Colonic mucosa (tissue), 4 donors: ENCODE measurements at regions of chr9 and their contacts with region 1.

Region 1: DNA sequence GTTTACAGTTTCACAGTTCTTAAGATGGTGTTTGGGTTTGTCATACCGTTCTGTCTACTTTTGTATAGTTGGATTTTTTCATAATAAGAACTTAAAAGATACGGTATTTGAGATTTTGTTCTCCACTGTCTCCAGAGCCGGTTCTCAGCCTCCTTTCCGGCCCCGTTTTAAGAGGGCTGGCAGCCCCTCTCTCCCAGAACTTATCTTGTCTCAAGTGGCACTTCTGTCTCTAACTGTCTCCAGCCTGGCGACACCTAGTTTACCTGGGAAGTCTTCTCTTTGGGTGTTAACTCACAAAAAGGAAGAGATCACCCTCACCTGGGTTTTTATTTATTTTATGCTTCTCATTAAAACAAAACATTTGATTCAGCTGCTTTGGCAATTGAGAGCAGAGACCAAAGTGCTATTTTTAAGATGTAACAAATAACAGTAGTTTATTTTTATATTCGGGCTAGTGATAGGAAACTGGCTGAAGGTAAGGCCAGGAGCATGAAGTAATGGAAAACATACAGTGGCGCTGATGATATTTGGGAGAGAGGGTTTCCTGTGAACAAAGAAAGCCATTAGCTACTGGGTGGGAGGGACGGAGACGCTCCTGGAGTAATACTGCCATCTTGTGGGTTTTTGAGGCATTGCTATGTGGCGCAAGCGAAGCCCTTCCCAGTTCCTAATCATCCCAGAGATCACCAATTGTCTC is 48.3 kb downstream of the ACER2 start:
- DNase-seq: peak; percentile 78
- H3K4me3 ChIP-seq: no peak overlapping the region
- H3K27ac ChIP-seq: no peak overlapping the region
- H3K4me1 ChIP-seq: no peaks in the 10 kb centered on the region
- H3K27me3 ChIP-seq: no peaks in the 10 kb centered on the region
- CTCF ChIP-seq: peak; percentile 95

Region 2: GRCh38 chr9:19102631-19103345 is 354.4 kb before region 1 on chr9 and contains the start of gene HAUS6:
- intact Hi-C with region 1: no loop called
- DNase-seq: peak; percentile 98
- H3K4me3 ChIP-seq: peak within 1 kb of the TSS; percentile 91
- H3K27ac ChIP-seq: peak within 1 kb of the TSS; percentile 87
- H3K4me1 ChIP-seq: no peaks in the 10 kb centered on the region
- H3K27me3 ChIP-seq: no peaks in the 10 kb centered on the region
- CTCF ChIP-seq: peak; percentile 35
- total RNA-seq, gene HAUS6: 9.2 to 11.8 TPM

Region 3: DNA sequence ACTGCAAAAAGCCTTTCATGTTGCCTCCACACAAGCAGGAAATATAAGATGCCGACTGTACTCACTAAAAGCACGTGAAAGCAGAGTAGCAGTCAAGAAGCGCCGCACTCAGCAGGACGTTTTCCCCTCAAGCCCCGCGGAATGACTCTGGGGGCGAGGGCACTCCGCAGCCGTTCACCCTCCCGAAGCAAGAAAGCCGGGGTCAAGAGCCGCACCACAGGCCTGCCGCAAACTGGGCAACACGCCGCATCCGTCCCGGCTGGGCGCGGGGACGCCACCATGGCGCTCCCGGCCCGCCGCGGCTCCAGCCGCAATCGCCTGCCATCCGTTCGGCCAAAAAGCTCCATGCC is 77.5 kb before region 1 on chr9:
- intact Hi-C with region 1: loop called (anchors 5 kb)
- DNase-seq: peak; percentile 43
- H3K4me3 ChIP-seq: peak overlapping the region; percentile 75
- H3K27ac ChIP-seq: peak overlapping the region; percentile 92
- H3K4me1 ChIP-seq: peaks cover 12% of the 10 kb centered on the region
- H3K27me3 ChIP-seq: no peaks in the 10 kb centered on the region
- CTCF ChIP-seq: no peak